KBM-7 (cell line): ENCODE measurements at regions of chr16 and their contacts with region 1.

Region 1: DNA sequence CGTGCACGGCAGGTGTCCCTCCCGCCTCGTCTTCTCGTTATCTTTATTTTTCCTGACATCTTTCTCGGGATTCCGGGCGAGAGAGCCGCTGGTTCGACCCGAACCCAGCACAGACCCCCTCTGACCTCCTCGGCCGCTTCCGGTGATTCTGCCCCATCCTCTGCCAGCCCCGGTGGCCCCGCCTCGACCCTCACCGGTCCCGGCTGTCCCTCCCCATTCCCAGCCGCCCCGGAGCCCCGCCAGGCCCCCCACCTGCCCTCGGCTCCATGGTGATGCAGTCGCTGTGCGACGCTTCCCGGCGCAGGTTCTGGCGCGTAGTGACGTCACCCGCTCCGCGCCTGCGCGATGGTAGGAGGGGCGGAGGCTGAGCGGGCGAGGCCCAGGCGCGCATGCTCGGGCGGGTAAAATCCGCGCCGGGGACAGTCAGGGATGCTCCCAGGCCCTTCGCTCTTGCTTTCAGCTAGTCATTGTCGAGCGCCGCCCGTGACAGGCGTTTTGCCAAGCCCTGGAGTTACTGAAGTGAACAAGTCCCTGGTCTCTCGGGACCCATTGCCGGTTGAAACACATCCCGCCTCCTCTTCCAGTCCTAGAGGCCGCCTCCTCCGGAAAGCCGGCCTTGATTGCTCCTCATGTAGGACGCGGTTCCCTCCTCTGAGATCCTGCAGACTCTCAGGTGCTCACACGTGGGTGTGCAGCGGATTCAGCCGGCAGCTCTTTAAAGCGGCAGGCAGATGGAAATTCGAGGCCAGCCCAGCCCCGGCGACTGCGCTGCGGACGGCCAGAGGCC is at the start of gene MTHFSD:
- DNase-seq: peak; percentile 86

Region 2: DNA sequence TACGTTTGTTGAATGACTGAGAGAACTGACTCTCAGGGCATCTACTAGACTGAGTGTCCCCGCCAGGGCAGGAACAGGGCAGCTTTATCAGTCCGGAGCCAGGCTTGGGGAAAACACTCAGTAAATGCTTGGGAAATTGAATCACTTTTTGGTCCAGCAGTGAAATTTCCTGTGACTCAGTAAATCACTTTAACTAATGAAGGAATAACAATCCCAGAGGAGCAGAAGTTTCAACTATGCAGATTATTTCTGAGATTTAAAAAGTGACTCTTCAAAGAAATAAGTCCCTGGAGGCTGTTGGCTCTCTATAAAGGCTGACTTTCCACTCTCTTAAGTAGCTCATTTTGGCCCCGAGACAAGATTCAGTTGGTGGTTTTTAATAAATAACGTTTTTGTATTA is 125.1 kb after region 1 on chr16:
- in situ Hi-C with region 1: no loop called
- DNase-seq: no peak

Region 3: GRCh38 chr16:87062569-87063442 is 507.7 kb after region 1 on chr16:
- in situ Hi-C with region 1: loop called (anchors 25 kb)
- DNase-seq: peak; percentile 64